ENCODE measurements at regions of chr18 and their contacts with region 1.

Region 1: GRCh38 chr18:28185121-28185520 is 8.2 kb upstream of the CDH2 start:
- H3K4me3 ChIP-seq: no peak overlapping the region
- H3K27ac ChIP-seq: no peak overlapping the region
- H3K4me1 ChIP-seq: no peaks in the 10 kb centered on the region
- CTCF ChIP-seq: no peak

Region 2: DNA sequence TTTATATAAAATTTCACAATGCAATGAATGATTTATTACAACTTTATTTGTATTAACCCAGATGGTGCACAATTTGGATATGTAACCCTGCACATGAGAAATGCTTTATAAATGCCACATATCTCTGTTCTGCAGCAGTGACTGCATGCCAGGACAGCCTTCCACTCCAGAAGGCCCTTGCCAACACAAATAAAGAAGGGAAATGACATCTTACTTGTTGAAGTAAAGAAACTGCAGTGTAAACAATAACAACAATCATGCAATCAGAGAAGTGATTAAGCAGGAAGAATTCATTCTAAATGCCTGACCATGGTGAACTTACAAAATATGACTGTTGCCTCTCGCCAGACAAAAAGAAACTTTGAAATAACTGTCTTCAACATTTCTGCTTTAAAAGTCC is 870.1 kb before region 1 on chr18:
- CTCF ChIA-PET with region 1: no interaction called
- POLR2A ChIA-PET with region 1: interaction called, 12 read pairs
- H3K4me3 ChIP-seq: no peak overlapping the region
- H3K27ac ChIP-seq: no peak overlapping the region
- H3K4me1 ChIP-seq: no peaks in the 10 kb centered on the region
- CTCF ChIP-seq: no peak

Region 3: GRCh38 chr18:28161608-28162599 is 23.2 kb before region 1 on chr18:
- CTCF ChIA-PET with region 1: no interaction called
- POLR2A ChIA-PET with region 1: no interaction called
- H3K4me3 ChIP-seq: no peak overlapping the region
- H3K27ac ChIP-seq: no peak overlapping the region
- H3K4me1 ChIP-seq: peaks cover 18% of the 10 kb centered on the region
- CTCF ChIP-seq: no peak

Measured in HEK293 (cell line).